ENCODE measurements at regions of chr4 and their contacts with region 1.

Region 1: GRCh38 chr4:2436301-2436700 is 17.5 kb downstream of the CFAP99 start:
- DNase-seq: peak; percentile 11
- H3K4me3 ChIP-seq: no peak overlapping the region
- H3K27ac ChIP-seq: no peak overlapping the region
- H3K4me1 ChIP-seq: no peaks in the 10 kb centered on the region
- H3K27me3 ChIP-seq: peaks cover 13% of the 10 kb centered on the region
- CTCF ChIP-seq: peak in 1 of 2 donors; percentile 29

Region 2: DNA sequence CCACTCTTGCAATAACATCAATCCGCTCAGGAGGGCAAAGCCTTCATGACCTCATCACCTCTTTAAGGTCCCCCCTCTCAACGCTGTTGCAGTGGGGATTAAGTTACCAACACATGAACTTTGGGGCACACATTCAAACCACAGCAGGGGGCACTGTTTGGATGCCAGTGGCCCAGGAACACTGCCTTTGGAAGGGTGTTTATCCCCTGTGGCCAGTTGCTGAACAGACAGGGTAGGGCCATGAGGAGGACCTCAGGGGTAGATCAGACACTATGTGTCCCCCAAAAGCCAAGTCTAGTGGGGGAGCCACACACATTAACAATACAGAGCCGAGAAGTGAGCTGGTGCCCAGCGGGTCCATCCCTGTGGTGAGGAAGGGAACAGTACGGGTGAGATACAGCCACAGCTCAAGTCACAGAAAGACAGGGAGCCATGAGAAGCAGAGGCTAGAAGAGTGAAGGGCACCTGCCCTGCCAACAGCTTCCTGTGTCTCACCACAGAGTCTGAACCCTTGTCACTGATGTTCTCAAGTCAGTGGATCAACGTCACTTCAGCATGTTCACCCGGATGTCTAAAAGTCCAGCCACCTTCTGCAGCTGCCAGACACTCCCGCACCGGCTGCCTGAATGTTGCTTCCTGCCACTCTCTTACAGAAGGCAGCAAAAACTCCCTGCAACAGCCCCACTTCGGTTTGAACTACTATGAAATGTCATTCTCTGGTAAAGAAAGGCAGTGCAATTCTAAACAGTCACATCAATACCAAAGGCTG is 154.5 kb before region 1 on chr4:
- CTCF ChIA-PET with region 1: no interaction called
- dilution Hi-C with region 1: no loop called
- in situ Hi-C with region 1: no loop called
- intact Hi-C with region 1: loop called (anchors 2 kb)
- DNase-seq: no peak
- H3K4me3 ChIP-seq: no peak overlapping the region
- H3K27ac ChIP-seq: no peak overlapping the region
- H3K4me1 ChIP-seq: peaks cover 11% of the 10 kb centered on the region
- H3K27me3 ChIP-seq: no peaks in the 10 kb centered on the region
- CTCF ChIP-seq: peak; percentile 11 to 24

Region 3: DNA sequence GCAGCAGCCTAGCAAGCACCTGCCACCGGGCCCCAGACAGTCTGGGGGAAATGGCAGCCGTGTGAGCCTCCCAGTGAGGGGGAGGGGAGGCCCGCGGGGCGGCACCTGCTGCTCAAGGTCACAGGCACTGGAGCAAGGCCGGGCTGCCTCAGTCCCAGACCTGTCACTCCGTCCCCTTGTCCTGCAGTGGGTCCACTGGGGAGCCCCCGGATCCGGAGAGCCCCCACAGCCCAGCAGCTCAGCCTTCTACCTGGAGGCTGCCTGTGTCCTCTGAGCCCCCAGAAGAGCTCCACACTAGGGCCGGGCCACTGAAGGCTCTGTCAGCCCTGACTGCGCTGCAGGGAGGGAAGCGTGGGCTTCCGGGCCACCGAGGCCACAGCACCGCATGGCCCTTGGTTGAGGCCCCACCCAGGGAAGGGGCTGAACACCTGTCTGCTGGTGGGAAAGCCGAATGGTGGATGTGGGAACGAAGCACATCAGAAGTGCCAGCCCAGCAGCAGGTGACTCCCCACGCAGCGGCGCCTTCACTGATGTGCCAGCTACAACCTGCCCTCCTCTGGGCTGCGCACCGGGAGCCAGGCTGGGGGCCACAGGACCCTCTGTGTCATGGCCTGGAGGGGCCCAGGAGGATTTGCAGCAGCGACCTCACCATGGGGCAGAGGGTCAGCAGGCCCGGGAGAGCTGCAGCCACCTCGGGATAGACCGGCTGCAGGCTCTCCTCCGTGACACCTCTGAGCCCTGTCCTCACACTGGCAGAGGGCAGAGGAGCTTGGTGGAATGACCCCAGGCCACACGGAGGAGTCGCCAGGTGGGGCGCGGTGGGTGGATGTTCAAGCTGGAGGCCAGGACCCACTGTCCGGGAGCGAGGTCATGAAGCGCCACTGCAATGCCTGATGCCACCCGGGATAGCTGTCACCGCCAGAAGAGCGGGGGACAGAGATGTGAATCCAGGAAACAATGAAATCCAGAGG is 139.4 kb before region 1 on chr4:
- CTCF ChIA-PET with region 1: no interaction called
- dilution Hi-C with region 1: no loop called
- in situ Hi-C with region 1: no loop called
- intact Hi-C with region 1: no loop called
- DNase-seq: no peak
- H3K4me3 ChIP-seq: no peak overlapping the region
- H3K27ac ChIP-seq: no peak overlapping the region
- H3K4me1 ChIP-seq: no peaks in the 10 kb centered on the region
- H3K27me3 ChIP-seq: peaks cover 6% of the 10 kb centered on the region
- CTCF ChIP-seq: no peak

Measured in mammary epithelial cell (primary cell).